ENCODE measurements at regions of chr17 and their contacts with region 1.

Region 1: GRCh38 chr17:17812211-17813057 is 24.4 kb downstream of the SREBF1 start:
- DNase-seq: peak; percentile 45 to 64 (median 61)
- H3K4me3 ChIP-seq: no peak overlapping the region
- H3K27ac ChIP-seq: no peak overlapping the region
- H3K4me1 ChIP-seq: peaks cover 0 to 10% (median 5%) of the 10 kb centered on the region in 4 experiments
- H3K27me3 ChIP-seq: no peaks in the 10 kb centered on the region

Region 2: DNA sequence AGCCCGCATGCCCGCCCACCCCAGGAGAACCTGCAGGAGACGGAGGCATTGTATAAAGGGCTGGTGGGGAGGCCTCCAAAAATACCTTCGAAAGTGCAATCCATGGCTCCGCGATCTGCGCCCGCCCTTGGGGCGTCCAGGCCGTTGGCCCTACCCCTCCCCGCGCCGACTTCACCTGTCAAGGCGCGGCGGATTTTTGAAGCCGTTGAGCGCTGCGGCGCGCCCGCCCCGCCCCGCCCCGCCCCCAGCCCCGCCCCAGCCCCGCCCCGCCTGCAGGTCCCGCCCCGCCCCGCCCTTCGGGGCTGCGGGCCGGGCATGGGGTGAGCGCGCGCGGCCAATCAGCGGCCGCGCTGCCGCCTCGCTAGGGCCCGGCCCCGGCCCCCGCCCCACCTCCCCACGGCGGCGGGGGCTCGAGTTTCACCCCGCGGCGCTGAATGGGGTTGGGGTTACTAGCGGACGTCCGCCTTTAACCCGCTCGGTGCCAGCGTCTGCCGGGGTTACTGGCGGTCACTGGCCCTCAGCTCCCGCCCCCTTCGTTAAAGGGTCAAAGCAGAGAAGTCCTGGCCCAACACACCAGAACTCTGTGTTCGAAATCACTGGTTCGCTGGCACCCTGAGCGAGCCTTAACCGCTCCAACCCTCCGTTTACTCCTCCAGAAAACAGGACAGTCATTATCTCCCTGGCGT is 11.1 kb after region 1 on chr17:
- CTCF ChIA-PET with region 1: interaction called, 23 read pairs
- POLR2A ChIA-PET with region 1: no interaction called
- DNase-seq: peak; percentile 72 to 86 (median 84)
- H3K4me3 ChIP-seq: peak overlapping the region; percentile 31 to 77 (median 69)
- H3K27ac ChIP-seq: peak overlapping the region in 1 of 2 experiments; percentile 76
- H3K4me1 ChIP-seq: peaks cover 6 to 89% (median 53%) of the 10 kb centered on the region in 4 experiments
- H3K27me3 ChIP-seq: no peaks in the 10 kb centered on the region

Region 3: GRCh38 chr17:17849845-17850373 is 37.5 kb after region 1 on chr17:
- CTCF ChIA-PET with region 1: interaction called, 295 read pairs
- POLR2A ChIA-PET with region 1: interaction called, 3 read pairs
- DNase-seq: peak; percentile 56 to 85 (median 85)
- H3K4me3 ChIP-seq: peak overlapping the region in 1 of 7 experiments; percentile 33
- H3K27ac ChIP-seq: peak overlapping the region in 1 of 2 experiments; percentile 51
- H3K4me1 ChIP-seq: peaks cover 0 to 56% (median 46%) of the 10 kb centered on the region in 4 experiments
- H3K27me3 ChIP-seq: no peaks in the 10 kb centered on the region

Region 4: GRCh38 chr17:17866897-17867296 is 54.5 kb after region 1 on chr17:
- CTCF ChIA-PET with region 1: interaction called, 295 read pairs
- POLR2A ChIA-PET with region 1: no interaction called
- DNase-seq: no peak
- H3K4me3 ChIP-seq: no peak overlapping the region
- H3K27ac ChIP-seq: no peak overlapping the region
- H3K4me1 ChIP-seq: peaks cover 0 to 11% (median 4%) of the 10 kb centered on the region in 4 experiments
- H3K27me3 ChIP-seq: no peaks in the 10 kb centered on the region

Measured in common myeloid progenitor, CD34-positive (primary cell).